Right cardiac atrium (tissue), 5 donors: ENCODE measurements at regions of chr7 and their contacts with region 1.

Region 1: DNA sequence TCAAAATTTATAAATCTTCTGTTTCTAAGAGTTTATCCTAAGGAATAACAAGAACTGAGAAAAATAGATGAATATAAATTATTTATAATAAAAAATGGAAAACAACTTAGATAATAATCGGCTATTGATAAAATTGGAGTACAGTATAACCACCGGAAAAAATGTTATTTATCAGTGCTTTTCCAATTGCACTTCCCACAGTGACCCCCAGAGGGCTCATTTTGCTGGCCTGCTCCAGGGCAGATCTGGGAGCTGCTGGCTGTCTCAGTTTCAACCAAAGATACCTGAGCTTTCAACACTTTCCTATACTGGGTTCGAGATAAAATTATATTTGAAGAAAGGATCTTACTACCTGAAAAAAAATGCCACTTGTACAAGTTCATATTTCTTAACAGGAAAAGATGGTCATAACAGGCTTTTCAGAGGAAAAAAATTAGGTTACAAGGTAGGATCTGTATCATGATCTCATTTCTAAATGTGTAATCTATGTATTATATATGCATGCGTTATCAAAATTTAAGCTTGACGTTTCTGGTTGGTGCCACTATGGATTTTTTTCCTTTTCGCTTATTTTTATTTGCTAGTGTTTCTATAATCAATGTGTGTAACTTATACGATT is 165.7 kb downstream of the NPSR1 start:
- DNase-seq: peak; percentile 37 to 64 (median 59)
- ATAC-seq: peak in 1 of 2 donors; percentile 61
- H3K4me3 ChIP-seq: no peak overlapping the region
- H3K27ac ChIP-seq: no peak overlapping the region
- H3K4me1 ChIP-seq: no peaks in the 10 kb centered on the region
- H3K27me3 ChIP-seq: no peaks in the 10 kb centered on the region

Region 2: GRCh38 chr7:34875481-34875880 is 51.7 kb after region 1 on chr7:
- intact Hi-C with region 1: no loop called
- DNase-seq: no peak
- ATAC-seq: no peak
- H3K4me3 ChIP-seq: no peak overlapping the region
- H3K27ac ChIP-seq: no peak overlapping the region
- H3K4me1 ChIP-seq: no peaks in the 10 kb centered on the region
- H3K27me3 ChIP-seq: no peaks in the 10 kb centered on the region

Region 3: GRCh38 chr7:34928049-34928448 is 104.3 kb after region 1 on chr7:
- intact Hi-C with region 1: loop called in 1 of 4 experiments (anchors 10 kb)
- DNase-seq: peak; percentile 44 to 67 (median 66)
- ATAC-seq: peak in 1 of 2 donors; percentile 45
- H3K4me3 ChIP-seq: no peak overlapping the region
- H3K27ac ChIP-seq: no peak overlapping the region
- H3K4me1 ChIP-seq: no peaks in the 10 kb centered on the region
- H3K27me3 ChIP-seq: no peaks in the 10 kb centered on the region

Region 4: GRCh38 chr7:35037526-35038339 is 214.0 kb after region 1 on chr7:
- intact Hi-C with region 1: loop called in 1 of 4 experiments (anchors 10 kb)
- DNase-seq: peak; percentile 96 to 99 (median 98)
- ATAC-seq: peak; percentile 91 to 95
- H3K4me3 ChIP-seq: peak overlapping the region; percentile 100
- H3K27ac ChIP-seq: peak overlapping the region; percentile 97
- H3K4me1 ChIP-seq: peaks cover 3% of the 10 kb centered on the region
- H3K27me3 ChIP-seq: no peaks in the 10 kb centered on the region